Lower lobe of right lung (tissue), 2 donors: ENCODE measurements at regions of chr1 and their contacts with region 1.

Region 1: GRCh38 chr1:46747683-46748288 is 28.9 kb upstream of the EFCAB14 start:
- DNase-seq: no peak
- ATAC-seq: peak; percentile 90 to 91
- H3K4me3 ChIP-seq: no peak overlapping the region
- H3K27ac ChIP-seq: no peak overlapping the region
- H3K4me1 ChIP-seq: peaks cover 20% of the 10 kb centered on the region
- H3K27me3 ChIP-seq: no peaks in the 10 kb centered on the region
- CTCF ChIP-seq: peak; percentile 74

Region 2: GRCh38 chr1:46527474-46528296 is 220.1 kb before region 1 on chr1:
- intact Hi-C with region 1: no loop called
- DNase-seq: peak; percentile 84
- ATAC-seq: peak; percentile 88 to 89
- H3K4me3 ChIP-seq: no peak overlapping the region
- H3K27ac ChIP-seq: no peak overlapping the region
- H3K4me1 ChIP-seq: peaks cover 6% of the 10 kb centered on the region
- H3K27me3 ChIP-seq: peaks cover 64% of the 10 kb centered on the region
- CTCF ChIP-seq: peak; percentile 91

Region 3: GRCh38 chr1:46830665-46831322 is 83.0 kb after region 1 on chr1:
- intact Hi-C with region 1: no loop called
- DNase-seq: no peak
- ATAC-seq: peak in 1 of 2 donors; percentile 7
- H3K4me3 ChIP-seq: no peak overlapping the region
- H3K27ac ChIP-seq: no peak overlapping the region
- H3K4me1 ChIP-seq: no peaks in the 10 kb centered on the region
- H3K27me3 ChIP-seq: no peaks in the 10 kb centered on the region
- CTCF ChIP-seq: no peak

Region 4: DNA sequence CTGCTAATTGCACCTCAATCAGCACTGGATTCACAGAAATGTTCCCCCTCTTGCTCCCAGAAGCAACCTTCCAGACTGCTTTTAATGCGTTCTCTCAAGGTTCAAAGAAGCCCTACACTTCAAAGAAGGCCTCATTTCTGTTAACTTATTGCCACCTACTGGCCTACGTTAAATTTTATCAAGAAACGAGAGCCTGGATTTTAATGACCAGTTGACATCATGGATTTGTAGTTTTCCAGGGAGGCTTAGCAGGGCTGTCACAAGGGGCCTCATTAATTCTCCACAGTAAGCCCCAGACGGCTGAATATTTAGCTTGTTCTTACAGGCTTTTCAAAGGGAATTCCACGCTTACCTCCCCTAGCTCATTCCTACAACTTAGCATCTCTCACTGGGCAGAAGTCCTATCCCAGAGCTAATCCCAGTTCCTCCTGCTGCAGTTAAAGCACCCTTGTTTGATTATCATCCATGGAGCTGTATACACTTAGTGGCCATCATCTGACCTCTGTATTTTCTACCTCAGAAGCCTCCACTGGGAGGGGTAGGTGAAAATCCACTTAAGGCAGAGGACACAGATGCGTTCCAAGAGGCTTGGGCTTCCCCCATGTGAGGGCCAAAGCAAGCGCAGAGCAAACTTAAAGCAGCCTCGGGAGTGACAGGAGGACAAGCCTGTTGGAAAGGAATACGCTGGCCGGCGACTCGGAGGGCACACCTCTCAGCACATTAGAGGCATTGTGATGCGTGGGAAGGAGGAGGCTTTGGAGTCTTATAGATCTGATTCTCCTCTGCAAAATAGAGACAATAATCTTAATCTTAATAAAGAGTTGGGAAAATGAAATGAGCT is 243.5 kb after region 1 on chr1:
- intact Hi-C with region 1: loop called (anchors 10 kb)
- DNase-seq: no peak
- ATAC-seq: peak; percentile 46 to 73
- H3K4me3 ChIP-seq: no peak overlapping the region
- H3K27ac ChIP-seq: no peak overlapping the region
- H3K4me1 ChIP-seq: no peaks in the 10 kb centered on the region
- H3K27me3 ChIP-seq: no peaks in the 10 kb centered on the region
- CTCF ChIP-seq: peak; percentile 17